ENCODE measurements at regions of chr11 and their contacts with region 1.

Region 1: GRCh38 chr11:64894070-64894796 is 15.8 kb upstream of the EHD1 start:
- DNase-seq: peak; percentile 85 to 96 (median 87)
- ATAC-seq: peak; percentile 46 to 84 (median 80)
- H3K4me3 ChIP-seq: no peak overlapping the region
- H3K27ac ChIP-seq: peak overlapping the region in 6 of 12 donors; percentile 7 to 74 (median 48)
- H3K4me1 ChIP-seq: peaks cover 0 to 47% (median 13%) of the 10 kb centered on the region in 12 donors
- H3K27me3 ChIP-seq: no peaks in the 10 kb centered on the region
- CTCF ChIP-seq: peak; percentile 86 to 95 (median 90)
- POLR2A ChIP-seq: no peak

Region 2: DNA sequence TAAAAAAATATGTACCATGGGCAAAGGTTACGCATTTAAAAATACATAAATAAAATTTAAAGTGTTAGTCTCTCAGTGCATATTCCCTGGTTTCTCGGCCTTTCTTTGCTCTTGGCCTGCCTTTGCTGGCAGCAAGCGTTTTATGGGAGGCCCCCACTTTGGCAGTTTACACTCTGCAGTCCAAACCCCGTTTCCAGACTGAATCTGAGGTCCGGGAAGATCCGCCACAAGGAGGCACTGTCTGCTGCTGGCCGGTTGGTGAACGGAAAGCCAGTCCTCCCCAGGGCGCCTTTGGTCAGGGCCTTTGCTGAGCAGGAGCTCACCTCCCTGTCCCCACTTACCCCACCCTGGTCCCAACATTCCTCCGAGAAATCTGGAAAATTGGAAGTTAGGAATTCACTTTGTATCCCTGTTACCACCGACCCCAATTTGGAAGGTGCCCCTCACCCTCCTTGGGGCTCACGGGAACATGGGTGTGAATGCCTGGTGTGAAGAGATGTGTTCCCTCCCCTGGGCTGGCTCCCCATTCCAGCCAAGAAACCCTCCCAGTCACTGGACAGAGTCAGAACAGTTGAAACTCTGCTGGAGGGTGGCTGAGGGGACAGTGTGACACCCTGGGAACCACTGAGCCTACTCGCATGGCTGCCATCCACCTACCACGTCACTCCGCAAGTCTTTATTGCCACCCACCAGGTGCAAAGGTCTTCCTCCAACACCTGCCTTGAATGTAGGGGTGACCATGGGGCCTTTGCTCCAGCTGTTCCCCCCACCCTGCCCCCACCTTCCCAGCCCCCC is 106.5 kb before region 1 on chr11:
- intact Hi-C with region 1: loop called in 2 of 10 experiments (anchors 5 kb)
- DNase-seq: peak in 1 of 5 donors; percentile 61
- ATAC-seq: peak in 3 of 4 donors; percentile 55 to 74 (median 65)
- H3K4me3 ChIP-seq: no peak overlapping the region
- H3K27ac ChIP-seq: peak overlapping the region in 1 of 12 donors; percentile 26
- H3K4me1 ChIP-seq: no peaks in the 10 kb centered on the region
- H3K27me3 ChIP-seq: no peaks in the 10 kb centered on the region
- CTCF ChIP-seq: peak; percentile 46 to 76 (median 62)
- POLR2A ChIP-seq: no peak

Region 3: DNA sequence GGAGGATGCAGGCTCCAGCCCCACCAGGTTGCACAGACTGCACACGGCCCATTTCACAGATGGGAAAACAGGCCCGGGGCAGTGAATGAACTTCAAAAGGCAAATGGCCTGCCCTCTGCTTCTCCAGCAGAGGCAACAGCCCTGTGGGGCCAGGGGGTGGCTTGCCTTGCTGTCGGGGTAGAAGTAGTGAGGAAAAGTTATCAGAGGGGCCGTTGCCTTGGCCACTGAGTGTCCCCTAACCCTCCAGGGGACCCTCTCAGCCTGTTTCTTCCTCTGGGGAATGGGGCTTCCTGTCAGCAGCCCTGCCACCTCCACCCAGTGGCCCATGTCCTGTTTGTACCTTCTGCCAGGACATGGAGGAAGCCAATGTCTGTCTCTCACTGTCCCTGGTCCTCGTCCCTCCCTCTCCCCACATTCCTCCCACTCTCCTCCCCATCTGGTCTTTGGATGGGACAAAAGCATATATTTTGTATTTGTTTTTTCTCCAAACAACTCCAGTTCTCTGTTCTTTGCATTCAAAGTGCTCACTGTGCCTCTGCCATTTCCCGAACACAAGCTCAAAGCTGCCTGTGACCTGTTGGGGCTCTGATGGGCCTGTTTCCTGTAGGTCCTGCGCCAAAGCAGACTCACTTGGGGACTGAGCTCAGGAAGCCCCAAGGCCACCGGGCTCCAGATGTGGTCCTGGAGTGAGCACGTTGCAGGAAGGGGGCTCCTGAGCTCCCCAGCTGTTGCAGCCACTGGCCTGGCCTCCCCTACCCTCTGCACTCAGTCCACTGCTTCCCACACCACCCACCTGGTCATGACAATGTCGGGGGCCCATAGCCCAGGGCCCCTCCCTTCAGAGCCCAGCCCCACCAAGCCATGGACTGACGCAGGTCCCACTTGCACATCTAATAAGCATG is 100.7 kb before region 1 on chr11:
- intact Hi-C with region 1: loop called in 2 of 10 experiments (anchors 5 kb)
- DNase-seq: no peak
- ATAC-seq: peak in 2 of 4 donors; percentile 12 to 53
- H3K4me3 ChIP-seq: no peak overlapping the region
- H3K27ac ChIP-seq: peak overlapping the region in 11 of 12 donors; percentile 25 to 68 (median 55)
- H3K4me1 ChIP-seq: peaks cover 0 to 16% (median 5%) of the 10 kb centered on the region in 12 donors
- H3K27me3 ChIP-seq: no peaks in the 10 kb centered on the region
- CTCF ChIP-seq: no peak
- POLR2A ChIP-seq: no peak

Region 4: DNA sequence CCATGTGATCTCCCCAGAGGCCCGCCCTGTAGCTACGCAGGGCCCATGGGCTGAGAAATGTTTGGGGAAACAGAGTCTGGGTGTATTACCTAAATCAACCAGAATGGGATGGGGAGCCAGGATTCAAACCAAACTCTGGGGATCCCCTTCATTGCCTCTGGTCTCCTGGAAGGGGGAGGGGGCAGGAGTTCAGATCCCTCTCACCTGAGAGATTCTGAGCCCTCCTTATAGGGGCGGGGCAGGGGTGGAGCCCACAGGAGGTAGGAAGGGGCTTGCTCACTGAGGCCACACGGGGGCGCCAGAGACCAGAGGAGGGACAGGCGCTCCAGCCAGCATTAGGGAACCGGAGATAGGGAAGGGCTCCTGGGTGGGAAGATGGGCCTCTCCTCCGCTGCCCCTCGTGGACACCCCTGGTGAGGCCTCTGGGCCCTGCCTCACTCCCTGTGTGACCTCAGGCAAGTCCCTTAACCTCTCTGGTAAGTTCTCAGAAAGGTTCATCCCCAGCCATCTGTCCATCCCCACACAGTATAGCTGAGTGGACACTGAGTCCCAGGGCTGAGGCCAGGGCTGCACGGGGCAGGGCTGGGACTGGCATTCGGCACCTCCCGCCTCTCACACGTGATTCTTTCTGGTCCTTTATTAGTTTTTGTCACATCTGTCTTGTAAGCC is 47.1 kb before region 1 on chr11:
- intact Hi-C with region 1: loop called (anchors 1 to 2 kb)
- DNase-seq: peak; percentile 90 to 96 (median 91)
- ATAC-seq: peak; percentile 79 to 91 (median 84)
- H3K4me3 ChIP-seq: no peak overlapping the region
- H3K27ac ChIP-seq: peak overlapping the region in 6 of 12 donors; percentile 15 to 89 (median 56)
- H3K4me1 ChIP-seq: peaks cover 7 to 61% (median 52%) of the 10 kb centered on the region in 12 donors
- H3K27me3 ChIP-seq: peaks cover 0 to 4% (median 0%) of the 10 kb centered on the region in 9 donors
- CTCF ChIP-seq: peak; percentile 94 to 99 (median 98)
- POLR2A ChIP-seq: peak in 1 of 2 donors; percentile 18

Region 5: DNA sequence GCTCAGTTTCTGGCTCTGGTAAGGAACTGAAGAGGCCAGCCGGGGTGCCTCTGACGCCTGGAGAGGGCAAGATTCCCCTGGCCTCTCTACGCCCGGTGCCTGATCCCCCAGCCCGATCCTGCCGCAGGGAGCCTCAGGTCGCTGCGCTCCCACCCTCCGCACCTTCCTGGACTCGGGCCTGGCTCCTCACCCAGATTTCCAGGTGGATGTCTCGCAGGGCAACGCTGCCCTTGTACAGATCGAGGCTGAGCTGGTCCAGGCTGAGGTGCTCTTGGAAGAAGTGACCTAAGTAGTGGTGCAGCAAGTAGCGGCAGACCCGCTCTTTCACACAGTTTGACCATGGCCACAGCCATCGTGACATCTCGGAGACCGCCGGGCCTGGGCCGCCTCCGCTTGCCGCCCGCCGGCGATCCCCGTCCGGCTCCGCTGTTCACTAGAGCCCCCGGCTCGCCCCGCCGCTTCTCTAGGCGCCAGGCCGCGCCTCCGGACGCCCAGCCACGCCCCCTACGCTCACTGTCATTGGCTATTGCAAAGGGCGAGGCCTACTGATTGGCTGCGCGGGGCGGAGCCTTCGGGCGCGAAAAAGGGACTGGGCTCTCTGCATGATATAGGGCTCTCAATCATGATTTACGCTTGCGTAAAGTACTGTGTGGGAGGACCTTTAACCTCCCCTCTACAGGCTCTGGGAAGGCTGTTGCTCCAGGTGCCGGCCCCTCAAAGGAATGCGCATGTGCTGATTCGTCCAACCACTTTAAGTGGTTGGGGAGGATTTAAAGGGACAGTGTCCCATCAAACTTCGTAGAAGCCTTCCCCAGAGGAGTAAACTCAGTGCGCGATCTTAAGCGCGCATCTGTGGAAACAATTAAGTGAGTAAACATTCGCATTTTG is 22.8 kb after region 1 on chr11 and contains the start of gene ATG2A:
- intact Hi-C with region 1: no loop called
- DNase-seq: peak; percentile 99 to 100 (median 99)
- ATAC-seq: peak; percentile 98 to 99 (median 98)
- H3K4me3 ChIP-seq: peak within 1 kb of the TSS; percentile 67 to 100 (median 97)
- H3K27ac ChIP-seq: peak within 1 kb of the TSS in 11 of 12 donors; percentile 78 to 95 (median 85)
- H3K4me1 ChIP-seq: peaks cover 0 to 42% (median 26%) of the 10 kb centered on the region in 12 donors
- H3K27me3 ChIP-seq: no peaks in the 10 kb centered on the region
- CTCF ChIP-seq: no peak
- POLR2A ChIP-seq: peak; percentile 79 to 96
- total RNA-seq, gene ATG2A: 11.4 to 38.5 (median 18.4) TPM